Mammary epithelial cell (primary cell): ENCODE measurements at regions of chr2 and their contacts with region 1.

Region 1: GRCh38 chr2:231321556-231322334 is 73.8 kb upstream of the B3GNT7 start:
- DNase-seq: no peak
- H3K4me3 ChIP-seq: no peak overlapping the region
- H3K27ac ChIP-seq: no peak overlapping the region
- H3K4me1 ChIP-seq: no peaks in the 10 kb centered on the region
- H3K27me3 ChIP-seq: no peaks in the 10 kb centered on the region
- CTCF ChIP-seq: no peak

Region 2: GRCh38 chr2:231348173-231348572 is 26.4 kb after region 1 on chr2:
- CTCF ChIA-PET with region 1: no interaction called
- dilution Hi-C with region 1: no loop called
- in situ Hi-C with region 1: no loop called
- intact Hi-C with region 1: no loop called
- DNase-seq: peak; percentile 61
- H3K4me3 ChIP-seq: no peak overlapping the region
- H3K27ac ChIP-seq: no peak overlapping the region
- H3K4me1 ChIP-seq: peaks cover 14% of the 10 kb centered on the region
- H3K27me3 ChIP-seq: no peaks in the 10 kb centered on the region
- CTCF ChIP-seq: no peak

Region 3: GRCh38 chr2:231378026-231378722 is 56.4 kb after region 1 on chr2:
- CTCF ChIA-PET with region 1: no interaction called
- dilution Hi-C with region 1: no loop called
- in situ Hi-C with region 1: no loop called
- intact Hi-C with region 1: no loop called
- DNase-seq: peak; percentile 22
- H3K4me3 ChIP-seq: no peak overlapping the region
- H3K27ac ChIP-seq: no peak overlapping the region
- H3K4me1 ChIP-seq: no peaks in the 10 kb centered on the region
- H3K27me3 ChIP-seq: no peaks in the 10 kb centered on the region
- CTCF ChIP-seq: no peak

Region 4: GRCh38 chr2:231425811-231426728 is 104.3 kb after region 1 on chr2:
- CTCF ChIA-PET with region 1: no interaction called
- dilution Hi-C with region 1: loop called (anchors 5 kb)
- in situ Hi-C with region 1: no loop called
- intact Hi-C with region 1: no loop called
- DNase-seq: peak; percentile 58
- H3K4me3 ChIP-seq: no peak overlapping the region
- H3K27ac ChIP-seq: no peak overlapping the region
- H3K4me1 ChIP-seq: no peaks in the 10 kb centered on the region
- H3K27me3 ChIP-seq: no peaks in the 10 kb centered on the region
- CTCF ChIP-seq: no peak